Colonic mucosa (tissue), 4 donors: ENCODE measurements at regions of chr3 and their contacts with region 1.

Region 1: DNA sequence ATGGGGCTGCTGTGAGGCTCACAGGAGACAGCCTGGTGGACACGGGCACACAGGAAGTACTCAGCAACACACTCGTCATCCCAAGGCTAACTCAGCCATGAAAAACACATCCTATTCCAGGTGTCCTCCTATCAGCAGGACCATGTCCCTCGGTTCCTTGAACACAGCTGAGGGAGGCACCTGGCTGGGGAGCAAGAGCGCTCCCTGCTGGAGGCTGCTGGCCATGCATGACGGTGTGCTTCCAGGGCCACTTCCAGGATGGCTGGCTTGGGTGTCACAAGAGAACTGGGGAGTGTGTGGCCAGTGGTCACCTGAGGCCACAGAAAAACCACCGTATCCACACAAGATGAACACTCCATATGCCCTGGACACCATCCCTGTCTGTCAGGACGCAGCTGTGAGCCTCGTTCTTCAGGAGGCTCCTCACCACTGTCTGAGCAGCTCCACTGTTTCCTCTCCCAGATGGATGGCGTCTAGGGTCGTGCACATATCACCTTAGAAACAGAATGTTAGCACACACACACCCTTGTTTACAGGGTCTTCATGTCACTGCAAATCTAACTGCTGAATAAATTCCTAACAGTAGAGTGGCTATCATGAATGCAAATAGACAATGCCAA is 31.0 kb downstream of the POC1A start:
- DNase-seq: peak; percentile 70
- H3K4me3 ChIP-seq: no peak overlapping the region
- H3K27ac ChIP-seq: no peak overlapping the region
- H3K4me1 ChIP-seq: no peaks in the 10 kb centered on the region
- H3K27me3 ChIP-seq: no peaks in the 10 kb centered on the region
- CTCF ChIP-seq: peak; percentile 97

Region 2: GRCh38 chr3:51929420-51930003 is 193.7 kb before region 1 on chr3:
- intact Hi-C with region 1: no loop called
- DNase-seq: no peak
- H3K4me3 ChIP-seq: no peak overlapping the region
- H3K27ac ChIP-seq: no peak overlapping the region
- H3K4me1 ChIP-seq: no peaks in the 10 kb centered on the region
- H3K27me3 ChIP-seq: no peaks in the 10 kb centered on the region
- CTCF ChIP-seq: no peak

Region 3: GRCh38 chr3:51941798-51942602 is 181.2 kb before region 1 on chr3 and contains the starts of genes PARP3 and RRP9:
- intact Hi-C with region 1: loop called (anchors 5 kb)
- DNase-seq: peak; percentile 99
- H3K4me3 ChIP-seq: peak within 1 kb of the TSS; percentile 82
- H3K27ac ChIP-seq: peak within 1 kb of the TSS; percentile 97
- H3K4me1 ChIP-seq: peaks cover 13% of the 10 kb centered on the region
- H3K27me3 ChIP-seq: no peaks in the 10 kb centered on the region
- CTCF ChIP-seq: peak; percentile 98
- total RNA-seq, gene PARP3: 17.0 to 18.0 TPM
- total RNA-seq, gene RRP9: 9.6 to 24.7 TPM

Region 4: DNA sequence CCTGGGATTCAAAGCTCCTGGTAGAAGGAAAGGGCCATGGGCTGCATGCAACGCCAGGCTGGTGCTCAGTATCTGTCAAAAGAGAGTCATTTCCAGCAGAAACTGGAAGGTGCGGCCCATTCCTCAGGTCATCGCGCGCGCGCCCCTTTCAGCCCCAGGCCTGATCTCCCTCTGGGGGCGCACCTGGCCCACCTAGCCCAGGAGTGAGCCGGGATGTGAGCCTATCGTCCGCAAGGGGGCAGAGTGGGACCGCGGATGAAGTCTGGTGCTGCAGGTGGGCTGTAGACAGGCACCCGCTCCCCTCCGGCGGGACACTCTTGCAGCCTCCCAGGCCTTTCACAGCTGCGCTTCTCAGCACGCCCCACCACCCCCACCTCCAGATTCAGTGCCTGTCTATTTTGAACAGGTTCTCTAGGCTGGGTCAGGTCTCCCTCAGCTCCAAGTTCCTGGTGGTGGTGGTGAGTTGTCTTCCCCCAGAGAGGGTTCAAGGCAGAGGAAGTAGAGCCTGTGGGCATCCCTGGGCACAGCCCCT is 121.7 kb before region 1 on chr3:
- intact Hi-C with region 1: loop called (anchors 1 kb)
- DNase-seq: peak; percentile 79
- H3K4me3 ChIP-seq: no peak overlapping the region
- H3K27ac ChIP-seq: no peak overlapping the region
- H3K4me1 ChIP-seq: no peaks in the 10 kb centered on the region
- H3K27me3 ChIP-seq: no peaks in the 10 kb centered on the region
- CTCF ChIP-seq: peak; percentile 84

Region 5: DNA sequence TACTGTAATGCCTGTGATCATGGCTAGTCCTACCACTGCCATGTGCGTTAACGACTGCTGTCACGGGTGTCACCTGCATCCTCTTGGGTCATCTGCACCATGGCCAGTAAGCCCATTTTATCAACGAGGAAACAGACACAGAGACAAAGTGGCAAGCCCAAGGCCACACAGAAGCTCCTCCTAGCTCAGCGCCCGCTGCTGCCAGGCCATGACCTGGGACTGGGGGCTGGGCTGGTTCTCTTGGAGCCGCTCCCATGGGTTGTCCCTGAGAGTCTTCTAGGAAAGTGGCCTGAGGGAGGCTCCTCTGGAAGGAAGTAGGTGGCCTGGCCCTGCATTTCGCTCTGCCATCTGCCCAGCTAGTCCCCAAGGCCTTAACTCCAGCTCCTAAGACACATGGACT is 71.8 kb before region 1 on chr3:
- intact Hi-C with region 1: no loop called
- DNase-seq: no peak
- H3K4me3 ChIP-seq: no peak overlapping the region
- H3K27ac ChIP-seq: no peak overlapping the region
- H3K4me1 ChIP-seq: peaks cover 9% of the 10 kb centered on the region
- H3K27me3 ChIP-seq: no peaks in the 10 kb centered on the region
- CTCF ChIP-seq: no peak

Region 6: DNA sequence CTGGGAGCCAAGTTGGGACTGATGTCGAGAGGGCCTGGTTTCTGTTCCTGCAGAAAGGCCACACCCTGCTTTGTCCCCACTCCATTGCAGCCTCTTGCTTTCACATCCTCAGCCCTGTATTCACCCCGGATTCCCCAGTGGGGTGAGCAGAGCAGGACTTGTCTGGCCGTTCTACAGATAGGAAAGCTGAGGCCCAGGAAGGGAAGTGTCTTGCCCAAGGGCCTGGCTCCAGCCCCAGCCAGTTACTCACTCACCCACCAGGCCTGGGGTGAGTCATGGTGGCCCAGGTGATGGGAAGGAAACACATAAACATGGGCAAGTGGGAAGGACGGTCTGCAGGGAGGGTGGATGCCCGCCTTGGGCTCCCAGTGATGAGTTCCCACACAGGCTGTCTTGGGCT is 60.7 kb before region 1 on chr3:
- intact Hi-C with region 1: loop called (anchors 5 kb)
- DNase-seq: no peak
- H3K4me3 ChIP-seq: no peak overlapping the region
- H3K27ac ChIP-seq: no peak overlapping the region
- H3K4me1 ChIP-seq: no peaks in the 10 kb centered on the region
- H3K27me3 ChIP-seq: no peaks in the 10 kb centered on the region
- CTCF ChIP-seq: no peak